Mammary epithelial cell (primary cell): ENCODE measurements at regions of chr2 and their contacts with region 1.

Region 1: DNA sequence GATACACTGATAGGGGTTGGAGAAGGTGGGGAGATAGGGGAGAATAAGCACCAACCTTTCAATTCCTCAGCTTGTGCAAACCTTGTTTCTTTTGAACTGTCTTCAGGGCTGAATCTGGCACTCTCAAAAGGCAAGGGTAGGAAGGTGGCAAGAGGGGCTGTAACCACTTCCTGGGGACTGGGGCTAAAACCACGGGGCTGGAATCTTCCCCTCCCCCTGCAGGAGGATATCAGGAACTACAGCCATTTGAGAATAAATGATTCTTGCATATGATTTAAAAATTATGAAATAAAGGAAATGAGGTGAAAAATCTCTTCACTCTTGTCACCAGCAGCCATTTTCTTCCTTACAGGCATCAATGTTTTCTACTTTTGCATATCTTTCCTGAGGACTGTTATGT is 50.8 kb downstream of the ATOH8 start:
- DNase-seq: no peak
- H3K4me3 ChIP-seq: no peak overlapping the region
- H3K27ac ChIP-seq: no peak overlapping the region
- H3K4me1 ChIP-seq: peaks cover 2% of the 10 kb centered on the region
- H3K27me3 ChIP-seq: no peaks in the 10 kb centered on the region
- CTCF ChIP-seq: peak; percentile 58 to 66

Region 2: DNA sequence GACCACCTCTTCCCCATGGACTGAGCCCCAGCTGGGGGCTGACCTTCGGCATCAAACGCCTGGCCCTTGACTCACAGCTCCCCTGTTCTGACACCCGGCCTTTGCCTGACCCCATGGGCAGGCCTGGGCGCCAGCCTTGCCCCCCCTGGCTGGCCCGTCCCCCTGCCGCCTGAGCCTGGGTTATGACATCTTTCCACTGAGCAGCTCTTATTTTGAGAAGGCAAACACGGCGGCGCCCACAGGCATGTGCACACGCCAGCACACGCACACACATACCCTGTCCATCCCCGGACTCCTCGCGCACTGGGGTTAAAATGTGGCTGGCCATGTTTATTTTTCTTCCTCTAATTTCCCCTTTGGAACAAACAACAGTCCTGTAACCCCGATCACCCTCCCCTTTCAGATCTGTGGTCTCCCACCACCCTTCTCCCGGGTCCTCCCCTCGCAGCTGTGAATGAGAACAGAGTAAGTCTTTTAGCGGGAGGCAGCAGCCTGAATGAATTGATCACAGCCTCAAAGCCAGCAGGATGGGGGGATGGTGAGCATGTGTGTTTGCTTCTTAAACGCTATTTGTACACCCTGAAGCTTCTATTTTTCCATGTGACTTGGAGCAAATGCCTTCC is 62.6 kb before region 1 on chr2:
- CTCF ChIA-PET with region 1: no interaction called
- dilution Hi-C with region 1: loop called (anchors 5 kb)
- in situ Hi-C with region 1: no loop called
- intact Hi-C with region 1: no loop called
- DNase-seq: peak; percentile 55
- H3K4me3 ChIP-seq: no peak overlapping the region
- H3K27ac ChIP-seq: peak overlapping the region; percentile 51
- H3K4me1 ChIP-seq: peaks cover 22% of the 10 kb centered on the region
- H3K27me3 ChIP-seq: peaks cover 13% of the 10 kb centered on the region
- CTCF ChIP-seq: no peak

Region 3: DNA sequence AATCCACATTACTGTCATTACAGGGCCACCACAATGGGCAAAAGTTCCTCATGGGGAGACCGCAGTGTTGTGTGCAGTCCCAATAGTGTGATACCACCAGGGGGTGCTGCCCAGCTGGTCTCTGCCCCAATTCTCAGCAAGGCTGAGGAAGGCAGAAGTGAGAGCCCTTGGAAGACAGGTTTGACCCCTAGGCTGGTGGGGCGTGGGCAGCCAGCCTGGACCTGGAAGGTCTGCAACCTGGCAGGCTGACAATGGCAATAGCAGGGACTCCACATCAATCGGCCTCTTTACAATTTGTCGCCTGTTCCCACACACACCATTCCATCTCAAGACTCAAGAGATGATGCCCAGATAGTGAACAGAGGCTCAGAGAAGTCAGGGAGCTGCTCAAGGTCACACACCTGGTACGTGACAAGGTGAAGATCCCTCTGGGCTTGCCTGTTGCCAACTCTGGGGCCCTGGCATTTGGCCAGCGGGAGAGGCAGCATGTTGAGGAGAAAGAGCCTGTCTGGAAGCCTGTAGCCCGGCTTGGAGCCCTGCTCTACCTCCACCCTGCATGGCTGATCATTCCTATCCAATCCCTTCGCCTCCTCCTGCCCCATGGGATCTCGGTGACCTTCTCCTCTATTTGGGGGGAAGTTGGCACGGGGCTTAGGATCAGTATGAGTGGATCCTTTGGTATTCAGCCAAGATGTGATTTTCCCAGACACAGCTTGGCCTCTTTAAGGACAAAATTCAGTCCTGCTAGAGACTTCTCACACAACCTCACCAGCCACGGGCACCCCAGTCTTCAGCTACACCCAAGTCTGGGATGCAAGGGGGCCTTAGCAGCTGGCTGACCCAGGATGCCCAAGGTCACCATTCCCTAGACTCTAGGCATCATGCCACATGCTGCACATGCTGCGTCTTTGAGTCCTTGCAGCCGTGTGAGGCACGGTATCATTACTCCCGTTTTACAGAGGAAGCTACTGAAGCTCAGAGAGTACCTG is 53.7 kb before region 1 on chr2:
- CTCF ChIA-PET with region 1: interaction called, 7 read pairs
- dilution Hi-C with region 1: no loop called
- in situ Hi-C with region 1: no loop called
- intact Hi-C with region 1: loop called (anchors 1 kb)
- DNase-seq: peak; percentile 28
- H3K4me3 ChIP-seq: no peak overlapping the region
- H3K27ac ChIP-seq: no peak overlapping the region
- H3K4me1 ChIP-seq: peaks cover 12% of the 10 kb centered on the region
- H3K27me3 ChIP-seq: peaks cover 40% of the 10 kb centered on the region
- CTCF ChIP-seq: peak; percentile 90 to 95

Region 4: DNA sequence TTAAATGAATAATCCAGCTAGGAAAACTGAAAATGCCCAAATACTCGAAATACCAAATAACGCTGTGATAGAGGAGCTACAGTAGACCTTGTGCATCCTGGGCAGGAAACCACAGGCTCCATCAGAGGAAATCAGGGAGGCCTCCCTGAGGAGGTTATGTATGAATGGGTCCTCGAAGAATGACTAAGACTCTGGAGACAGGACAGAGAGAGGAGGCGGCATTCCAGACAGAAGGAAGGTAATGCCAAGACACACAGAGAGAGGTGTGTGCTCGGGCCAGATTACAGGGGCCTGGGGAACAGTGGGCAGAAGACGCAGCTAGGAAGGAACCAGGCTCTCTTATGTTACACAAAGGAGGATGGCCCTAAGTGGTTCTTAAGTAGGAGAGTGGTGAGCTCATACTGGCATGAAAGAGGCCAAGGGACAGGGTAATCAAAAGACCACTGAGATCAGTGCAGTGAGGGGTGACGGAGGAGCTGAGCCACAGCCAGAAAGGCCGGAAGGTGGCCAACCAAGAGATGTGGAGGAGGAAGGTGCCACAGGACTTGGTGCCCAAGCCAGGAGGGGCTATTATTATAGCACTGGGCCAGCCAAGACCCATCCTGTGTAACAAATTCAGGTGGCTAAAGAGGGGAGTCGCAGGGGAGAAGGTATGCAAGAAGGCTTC is 74.3 kb after region 1 on chr2:
- CTCF ChIA-PET with region 1: no interaction called
- dilution Hi-C with region 1: loop called (anchors 5 kb)
- in situ Hi-C with region 1: no loop called
- intact Hi-C with region 1: no loop called
- DNase-seq: no peak
- H3K4me3 ChIP-seq: no peak overlapping the region
- H3K27ac ChIP-seq: no peak overlapping the region
- H3K4me1 ChIP-seq: peaks cover 8% of the 10 kb centered on the region
- H3K27me3 ChIP-seq: no peaks in the 10 kb centered on the region
- CTCF ChIP-seq: no peak

Region 5: GRCh38 chr2:86160156-86160952 is 355.8 kb after region 1 on chr2:
- CTCF ChIA-PET with region 1: no interaction called
- dilution Hi-C with region 1: no loop called
- in situ Hi-C with region 1: no loop called
- intact Hi-C with region 1: no loop called
- DNase-seq: no peak
- H3K4me3 ChIP-seq: no peak overlapping the region
- H3K27ac ChIP-seq: no peak overlapping the region
- H3K4me1 ChIP-seq: no peaks in the 10 kb centered on the region
- H3K27me3 ChIP-seq: no peaks in the 10 kb centered on the region
- CTCF ChIP-seq: no peak